Mammary epithelial cell (primary cell): ENCODE measurements at regions of chr12 and their contacts with region 1.

Region 1: GRCh38 chr12:65673732-65674131 is 150.6 kb upstream of the HMGA2 start:
- DNase-seq: no peak
- H3K4me3 ChIP-seq: no peak overlapping the region
- H3K27ac ChIP-seq: peak overlapping the region; percentile 98
- H3K4me1 ChIP-seq: peaks cover 55% of the 10 kb centered on the region
- H3K27me3 ChIP-seq: no peaks in the 10 kb centered on the region
- CTCF ChIP-seq: peak in 1 of 2 donors; percentile 46

Region 2: GRCh38 chr12:65306366-65307168 is 367.2 kb before region 1 on chr12:
- CTCF ChIA-PET with region 1: no interaction called
- dilution Hi-C with region 1: no loop called
- in situ Hi-C with region 1: loop called in 1 of 2 experiments (anchors 25 kb)
- intact Hi-C with region 1: loop called (anchors 2 kb)
- DNase-seq: peak; percentile 76
- H3K4me3 ChIP-seq: peak overlapping the region; percentile 20 to 33 (median 21)
- H3K27ac ChIP-seq: peak overlapping the region; percentile 90
- H3K4me1 ChIP-seq: peaks cover 29% of the 10 kb centered on the region
- H3K27me3 ChIP-seq: no peaks in the 10 kb centered on the region
- CTCF ChIP-seq: peak; percentile 83 to 84

Region 3: DNA sequence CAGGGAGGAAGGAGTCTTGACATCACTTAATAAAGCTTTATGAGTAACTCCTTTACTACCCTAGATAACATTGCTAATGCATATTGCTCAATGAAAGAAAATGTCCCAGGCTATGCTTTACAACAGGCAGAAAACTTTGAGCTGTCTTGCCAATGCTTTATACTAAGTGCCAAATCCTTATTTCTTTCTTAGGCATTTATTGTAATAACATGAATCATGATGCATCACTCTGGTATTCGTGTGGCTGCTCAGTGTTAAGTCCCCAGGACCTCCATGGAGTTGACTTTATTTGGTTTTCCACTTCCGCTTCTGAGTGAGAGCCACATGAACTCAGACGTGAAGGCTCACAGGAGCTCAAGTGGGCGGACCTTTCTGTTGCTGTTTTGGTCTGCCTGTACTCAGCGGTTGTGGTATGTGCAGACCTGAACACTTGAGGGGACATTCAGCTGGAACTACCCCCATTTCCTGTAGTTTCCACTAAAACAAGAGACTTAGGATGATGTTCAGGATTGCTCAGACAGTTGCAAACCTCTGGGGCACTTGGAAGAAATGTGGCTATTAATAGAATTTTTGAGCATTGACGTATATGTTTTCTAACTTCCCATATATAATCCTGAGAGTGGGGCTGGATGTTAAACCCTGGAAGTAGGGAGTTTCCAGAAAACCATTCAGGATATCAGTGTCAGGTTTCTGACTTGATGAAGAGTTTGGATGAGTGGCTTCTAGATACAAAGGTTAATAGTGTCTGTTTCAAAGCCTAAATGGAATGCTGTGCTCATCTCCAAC is 136.7 kb before region 1 on chr12:
- CTCF ChIA-PET with region 1: no interaction called
- dilution Hi-C with region 1: no loop called
- in situ Hi-C with region 1: no loop called
- intact Hi-C with region 1: loop called (anchors 5 kb)
- DNase-seq: peak; percentile 97
- H3K4me3 ChIP-seq: no peak overlapping the region
- H3K27ac ChIP-seq: peak overlapping the region; percentile 80
- H3K4me1 ChIP-seq: peaks cover 51% of the 10 kb centered on the region
- H3K27me3 ChIP-seq: no peaks in the 10 kb centered on the region
- CTCF ChIP-seq: no peak

Region 4: GRCh38 chr12:65597527-65597926 is 76.2 kb before region 1 on chr12:
- CTCF ChIA-PET with region 1: interaction called, 3 read pairs
- dilution Hi-C with region 1: loop called (anchors 10 kb)
- in situ Hi-C with region 1: loop called in 1 of 2 experiments (anchors 5 kb)
- intact Hi-C with region 1: loop called (anchors 1 kb)
- DNase-seq: peak; percentile 18
- H3K4me3 ChIP-seq: no peak overlapping the region
- H3K27ac ChIP-seq: peak overlapping the region; percentile 90
- H3K4me1 ChIP-seq: peaks cover 35% of the 10 kb centered on the region
- H3K27me3 ChIP-seq: no peaks in the 10 kb centered on the region
- CTCF ChIP-seq: no peak

Region 5: GRCh38 chr12:65649126-65649525 is 24.6 kb before region 1 on chr12:
- CTCF ChIA-PET with region 1: no interaction called
- dilution Hi-C with region 1: no loop called
- in situ Hi-C with region 1: no loop called
- intact Hi-C with region 1: loop called (anchors 2 kb)
- DNase-seq: peak; percentile 99
- H3K4me3 ChIP-seq: no peak overlapping the region
- H3K27ac ChIP-seq: peak overlapping the region; percentile 93
- H3K4me1 ChIP-seq: peaks cover 31% of the 10 kb centered on the region
- H3K27me3 ChIP-seq: no peaks in the 10 kb centered on the region
- CTCF ChIP-seq: no peak

Region 6: DNA sequence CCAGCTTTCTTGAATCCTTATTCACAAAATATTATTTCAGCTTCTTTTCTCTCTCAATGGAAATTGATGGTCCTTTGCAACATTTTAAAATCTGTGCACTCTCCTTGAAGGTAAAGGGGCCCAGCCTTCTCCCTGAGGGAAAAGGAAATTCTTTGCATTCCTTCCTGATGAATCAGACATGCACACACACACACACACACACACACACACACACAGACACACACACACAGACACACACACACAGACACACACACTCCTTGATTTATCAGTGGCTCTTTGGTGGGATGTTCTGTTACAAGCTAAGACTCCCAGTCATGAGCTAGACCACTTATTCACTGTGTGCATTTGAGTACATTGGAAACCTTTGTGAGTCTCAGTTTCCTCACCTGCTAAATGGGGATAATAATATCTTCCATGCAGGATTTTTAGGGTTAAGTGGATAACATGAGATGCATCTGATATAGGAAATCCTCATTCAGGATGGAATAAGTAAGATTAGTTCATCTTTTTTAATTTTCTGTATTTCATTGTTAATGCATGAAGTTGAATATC is 105.4 kb after region 1 on chr12:
- CTCF ChIA-PET with region 1: no interaction called
- dilution Hi-C with region 1: no loop called
- in situ Hi-C with region 1: no loop called
- intact Hi-C with region 1: no loop called
- DNase-seq: peak; percentile 45
- H3K4me3 ChIP-seq: no peak overlapping the region
- H3K27ac ChIP-seq: peak overlapping the region; percentile 53
- H3K4me1 ChIP-seq: peaks cover 47% of the 10 kb centered on the region
- H3K27me3 ChIP-seq: no peaks in the 10 kb centered on the region
- CTCF ChIP-seq: no peak

Region 7: GRCh38 chr12:66087365-66087943 is 413.7 kb after region 1 on chr12:
- CTCF ChIA-PET with region 1: no interaction called
- dilution Hi-C with region 1: no loop called
- in situ Hi-C with region 1: no loop called
- intact Hi-C with region 1: loop called (anchors 10 kb)
- DNase-seq: peak; percentile 54
- H3K4me3 ChIP-seq: no peak overlapping the region
- H3K27ac ChIP-seq: no peak overlapping the region
- H3K4me1 ChIP-seq: no peaks in the 10 kb centered on the region
- H3K27me3 ChIP-seq: no peaks in the 10 kb centered on the region
- CTCF ChIP-seq: peak; percentile 88